ENCODE measurements at regions of chr10 and their contacts with region 1.

Region 1: GRCh38 chr10:102917962-102918816 is at the start of gene CNNM2:
- DNase-seq: peak; percentile 100
- ATAC-seq: peak; percentile 98
- H3K4me3 ChIP-seq: peak within 1 kb of the TSS; percentile 93
- H3K27ac ChIP-seq: peak within 1 kb of the TSS; percentile 82
- H3K4me1 ChIP-seq: peaks cover 21% of the 10 kb centered on the region
- H3K27me3 ChIP-seq: no peaks in the 10 kb centered on the region
- CTCF ChIP-seq: no peak
- total RNA-seq, gene CNNM2: 12.9 TPM

Region 2: DNA sequence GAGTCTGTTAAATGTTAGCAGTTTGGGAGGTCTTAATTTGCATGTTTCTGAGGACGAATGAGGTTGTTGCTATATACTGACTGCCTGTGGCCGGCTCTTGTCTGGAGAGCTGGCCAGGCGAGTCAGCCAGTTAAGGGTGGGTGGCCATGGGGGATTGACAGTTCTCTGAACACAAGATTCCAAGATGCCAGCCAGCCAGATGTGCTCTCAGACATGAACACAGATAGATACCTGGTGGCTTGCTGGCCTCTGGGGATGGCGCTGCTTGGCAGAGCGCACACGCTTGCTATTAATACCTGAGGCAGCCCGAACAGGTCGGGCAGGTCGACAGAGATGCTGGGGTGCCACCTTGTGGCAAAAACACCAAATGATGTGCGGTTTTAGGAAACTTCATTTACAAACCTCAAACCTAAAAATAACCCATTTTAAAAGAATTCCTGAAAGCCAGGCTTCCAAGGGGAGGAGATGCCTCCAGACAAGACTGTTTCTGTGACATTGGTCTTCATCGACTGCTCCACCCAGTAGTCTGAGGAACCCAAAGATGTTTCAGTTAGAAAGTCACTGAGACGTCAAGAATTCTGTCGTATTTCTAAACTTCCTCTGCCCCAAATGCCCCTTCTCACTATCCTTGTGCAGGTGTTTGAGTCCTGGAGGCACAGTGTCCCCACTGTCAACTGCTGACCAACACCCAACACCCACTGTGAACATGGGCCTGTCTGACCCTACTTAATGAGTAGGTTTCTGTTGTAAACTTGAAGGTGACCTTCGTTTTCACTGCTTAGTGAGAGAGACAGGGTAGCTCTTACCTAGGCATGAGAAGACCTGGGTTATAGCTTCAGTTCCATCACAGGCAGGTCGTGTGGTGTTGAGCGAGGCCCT is 151.5 kb after region 1 on chr10:
- intact Hi-C with region 1: loop called (anchors 10 kb)
- DNase-seq: peak; percentile 75
- ATAC-seq: peak; percentile 88
- H3K4me3 ChIP-seq: no peak overlapping the region
- H3K27ac ChIP-seq: no peak overlapping the region
- H3K4me1 ChIP-seq: no peaks in the 10 kb centered on the region
- H3K27me3 ChIP-seq: no peaks in the 10 kb centered on the region
- CTCF ChIP-seq: peak; percentile 67

Region 3: DNA sequence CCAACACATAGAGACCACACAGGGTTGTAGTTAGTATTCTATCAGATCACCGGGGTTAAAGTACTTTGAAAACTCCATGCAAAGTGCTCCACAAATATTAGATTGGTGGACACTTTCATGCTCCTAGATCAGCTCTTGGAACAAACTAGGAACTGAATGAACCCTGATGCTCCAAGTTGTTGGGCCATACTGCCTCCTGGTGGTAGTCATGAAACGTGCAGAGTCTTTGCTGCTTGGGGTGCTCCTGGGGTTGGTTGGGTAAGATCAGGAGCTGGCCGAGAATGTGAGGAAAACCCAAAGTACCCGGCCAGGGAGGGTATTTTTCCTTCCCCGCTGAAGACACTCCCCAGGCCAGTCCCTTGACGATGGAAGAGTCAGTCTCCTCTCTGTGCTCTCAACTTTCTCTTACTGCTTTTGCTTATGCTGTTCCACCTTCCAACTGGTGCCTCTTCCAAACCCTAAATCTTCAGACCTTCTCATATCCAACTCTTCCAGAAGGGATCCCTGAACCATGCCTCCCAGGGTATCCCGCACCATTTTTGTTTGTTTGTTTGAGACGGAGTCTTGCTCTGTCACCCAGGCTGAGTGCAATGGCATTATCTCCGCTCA is 326.6 kb after region 1 on chr10:
- intact Hi-C with region 1: loop called (anchors 10 kb)
- DNase-seq: peak; percentile 74
- ATAC-seq: peak; percentile 91
- H3K4me3 ChIP-seq: no peak overlapping the region
- H3K27ac ChIP-seq: no peak overlapping the region
- H3K4me1 ChIP-seq: peaks cover 23% of the 10 kb centered on the region
- H3K27me3 ChIP-seq: no peaks in the 10 kb centered on the region
- CTCF ChIP-seq: peak; percentile 90

Region 4: DNA sequence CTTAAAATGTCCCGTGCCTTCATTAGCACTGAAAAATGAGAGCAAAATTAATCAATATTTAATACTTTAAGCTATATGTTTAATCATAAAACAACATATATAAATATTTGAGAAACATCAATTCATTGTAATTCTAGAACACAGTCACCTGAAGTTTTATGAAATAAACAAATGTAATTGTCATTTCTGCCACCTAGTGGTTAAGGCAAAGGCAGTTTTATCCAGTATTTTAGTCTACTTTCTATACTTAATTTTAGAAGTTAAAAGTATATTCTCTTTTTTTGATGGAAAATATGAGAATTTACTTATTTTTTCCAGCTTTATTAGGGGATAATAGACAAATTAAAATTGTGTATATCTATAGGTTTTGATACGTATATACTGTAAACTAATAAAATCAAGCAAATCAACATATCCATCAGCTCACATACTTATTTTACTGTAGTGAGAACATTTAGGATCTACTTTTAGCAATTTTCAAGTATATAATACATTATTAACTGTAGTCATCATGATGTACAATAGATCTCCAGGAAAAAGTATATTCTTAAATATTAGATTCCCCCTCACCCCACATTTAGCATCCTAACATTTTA is 415.8 kb after region 1 on chr10:
- intact Hi-C with region 1: loop called (anchors 10 kb)
- DNase-seq: no peak
- ATAC-seq: no peak
- H3K4me3 ChIP-seq: no peak overlapping the region
- H3K27ac ChIP-seq: no peak overlapping the region
- H3K4me1 ChIP-seq: no peaks in the 10 kb centered on the region
- H3K27me3 ChIP-seq: no peaks in the 10 kb centered on the region
- CTCF ChIP-seq: peak; percentile 68